HepG2 (cell line): ENCODE measurements at regions of chr17 and their contacts with region 1.

Region 1: DNA sequence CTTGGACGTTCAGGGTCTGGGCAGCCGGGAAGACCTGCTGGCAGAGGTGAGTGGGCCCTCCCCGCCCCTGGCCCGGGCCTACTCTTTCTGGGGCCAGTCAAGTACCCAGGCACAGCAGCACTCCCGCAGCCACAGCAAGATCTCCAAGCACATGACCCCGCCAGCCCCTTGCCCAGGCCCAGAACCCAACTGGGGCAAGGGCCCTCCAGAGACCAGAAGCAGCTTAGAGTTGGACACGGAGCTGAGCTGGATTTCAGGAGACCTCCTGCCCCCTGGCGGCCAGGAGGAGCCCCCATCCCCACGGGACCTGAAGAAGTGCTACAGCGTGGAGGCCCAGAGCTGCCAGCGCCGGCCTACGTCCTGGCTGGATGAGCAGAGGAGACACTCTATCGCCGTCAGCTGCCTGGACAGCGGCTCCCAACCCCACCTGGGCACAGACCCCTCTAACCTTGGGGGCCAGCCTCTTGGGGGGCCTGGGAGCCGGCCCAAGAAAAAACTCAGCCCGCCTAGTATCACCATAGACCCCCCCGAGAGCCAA is 8.6 kb upstream of the ABCC3 start:
- DNase-seq: peak; percentile 84
- ATAC-seq: peak; percentile 82
- H3K4me3 ChIP-seq: peak overlapping the region; percentile 40 to 74 (median 45); a peak in 5 of 6 replicates
- H3K27ac ChIP-seq: no peak overlapping the region
- H3K4me1 ChIP-seq: peaks cover 63% of the 10 kb centered on the region
- H3K27me3 ChIP-seq: peaks cover 0 to 34% of the 10 kb centered on the region in 2 experiments; a peak in 4 of 5 replicates
- CTCF ChIP-seq: peak; percentile 99
- EP300 ChIP-seq: no peak
- POLR2A ChIP-seq: no peak
- RAD21 ChIP-seq: peak; percentile 97

Region 2: DNA sequence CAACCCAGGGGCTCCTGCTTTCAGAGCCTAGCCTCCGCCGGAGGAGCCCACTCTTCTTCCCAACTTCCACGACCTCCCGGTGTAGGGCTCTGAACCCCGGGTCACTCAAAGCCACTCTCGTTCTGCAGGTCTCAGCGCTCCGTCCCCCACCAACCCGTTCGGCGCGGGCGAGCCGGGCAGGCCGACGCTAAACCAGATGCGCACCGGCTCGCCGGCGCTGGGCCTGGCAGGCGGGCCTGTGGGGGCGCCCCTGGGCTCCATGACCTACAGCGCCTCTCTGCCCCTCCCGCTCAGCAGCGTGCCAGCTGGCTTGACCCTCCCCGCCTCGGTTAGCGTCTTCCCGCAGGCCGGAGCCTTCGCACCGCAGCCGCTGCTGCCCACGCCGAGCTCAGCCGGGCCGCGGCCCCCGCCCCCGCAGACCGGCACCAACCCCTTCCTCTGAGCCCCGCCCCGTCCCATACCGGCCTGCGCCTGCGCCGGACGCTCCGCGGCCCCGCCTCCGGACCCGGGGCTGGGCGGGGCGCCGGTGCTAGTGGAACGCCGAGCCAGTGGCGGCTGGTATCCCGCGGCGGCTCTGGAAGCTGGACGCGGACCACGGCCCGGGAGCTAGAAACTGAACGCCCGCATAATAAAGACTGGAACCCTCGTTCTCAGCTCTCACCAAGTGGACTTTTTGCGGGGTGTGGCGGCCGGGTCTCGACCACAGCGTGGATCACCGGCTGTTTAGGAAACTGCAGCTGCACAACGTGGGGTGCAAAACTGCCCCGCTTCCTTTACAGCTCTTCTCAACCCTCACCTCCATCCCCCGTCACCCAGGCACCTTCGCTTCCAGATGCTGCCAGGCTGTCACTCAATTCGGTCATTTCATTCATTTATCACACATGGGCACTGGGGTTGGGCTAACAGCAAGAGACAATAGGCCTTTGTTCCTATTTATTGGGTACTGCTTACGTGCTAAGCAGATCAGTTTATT is 84.1 kb before region 1 on chr17:
- CTCF ChIA-PET with region 1: interaction called, 18 read pairs
- POLR2A ChIA-PET with region 1: interaction called, 45 read pairs
- in situ Hi-C with region 1: loop called (anchors 5 kb)
- intact Hi-C with region 1: loop called (anchors 1 kb)
- DNase-seq: peak; percentile 81
- ATAC-seq: peak; percentile 69
- H3K4me3 ChIP-seq: peak overlapping the region; percentile 73 to 87 (median 78)
- H3K27ac ChIP-seq: peak overlapping the region; percentile 97
- H3K4me1 ChIP-seq: peaks cover 80% of the 10 kb centered on the region
- H3K27me3 ChIP-seq: no peaks in the 10 kb centered on the region; a peak in 1 of 5 replicates
- CTCF ChIP-seq: peak; percentile 54; the same call in 1 of the 2 replicates
- EP300 ChIP-seq: 0 out of 4 replicates have a peak, but pooled peaks of 1 of the 2 experiments have one; percentile 5
- POLR2A ChIP-seq: peak; percentile 90
- RAD21 ChIP-seq: peak; percentile 69; the same call in 1 of the 2 replicates

Region 3: GRCh38 chr17:50547035-50547735 is 78.9 kb before region 1 on chr17 and contains the start of gene SPATA20:
- CTCF ChIA-PET with region 1: interaction called, 18 read pairs
- POLR2A ChIA-PET with region 1: interaction called, 45 read pairs
- in situ Hi-C with region 1: loop called (anchors 5 kb)
- intact Hi-C with region 1: loop called (anchors 1 kb)
- DNase-seq: peak; percentile 88
- ATAC-seq: peak; percentile 76
- H3K4me3 ChIP-seq: peak within 1 kb of the TSS; percentile 63 to 87 (median 79)
- H3K27ac ChIP-seq: peak within 1 kb of the TSS; percentile 62
- H3K4me1 ChIP-seq: peaks cover 74% of the 10 kb centered on the region
- H3K27me3 ChIP-seq: no peaks in the 10 kb centered on the region; a peak in 1 of 5 replicates
- CTCF ChIP-seq: peak; percentile 99
- EP300 ChIP-seq: peak in 1 of 2 experiments; percentile 31; a peak in 1 of 4 replicates
- POLR2A ChIP-seq: peak; percentile 81 to 89
- RAD21 ChIP-seq: peak; percentile 100
- total RNA-seq, gene SPATA20: 35.7 and 64.8 TPM in 2 replicates

Region 4: DNA sequence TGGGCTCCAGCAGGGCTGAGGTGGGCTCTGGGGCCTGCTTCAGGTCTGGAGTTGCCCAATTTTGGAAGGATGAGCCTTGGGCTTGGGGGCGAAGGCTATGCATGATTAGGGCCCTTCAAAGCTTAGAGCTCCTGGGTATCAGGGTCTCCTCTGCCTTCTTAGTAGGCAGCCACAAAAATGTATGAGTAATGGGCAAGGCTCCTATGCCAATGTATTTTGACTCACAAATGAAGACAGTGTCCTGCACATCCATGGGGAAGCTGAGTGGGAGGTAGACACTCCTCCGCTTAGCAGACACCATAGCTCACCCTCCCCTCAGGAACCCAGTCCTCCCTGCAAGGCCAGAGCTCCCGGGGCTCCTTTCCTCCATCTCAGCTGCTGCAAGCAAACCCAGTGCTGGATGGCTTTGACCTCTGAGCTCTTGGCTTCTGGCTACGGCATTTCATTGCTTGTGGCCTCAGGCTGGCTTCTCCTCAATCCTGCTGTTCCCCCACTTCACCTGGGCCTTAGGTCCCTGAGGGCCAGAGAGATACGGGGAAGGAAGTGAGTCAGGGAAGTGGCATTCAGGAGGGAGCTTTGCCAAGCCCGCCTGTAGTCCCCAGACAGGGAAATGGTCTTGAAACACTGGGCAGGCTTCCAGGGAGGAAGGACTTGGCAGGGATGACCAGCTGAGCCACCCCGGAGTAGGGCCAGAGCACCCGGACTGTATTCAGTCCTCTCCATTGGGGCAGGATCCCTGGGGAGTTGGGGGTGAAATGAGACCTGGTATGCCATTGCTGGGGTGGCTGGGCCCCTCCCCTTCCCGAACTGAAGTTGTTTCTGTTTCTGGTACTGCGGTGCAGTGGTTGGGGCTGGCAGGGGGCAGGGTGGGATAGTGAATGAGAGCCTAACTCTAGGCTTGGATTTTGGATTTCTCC is 13.0 kb after region 1 on chr17:
- CTCF ChIA-PET with region 1: no interaction called
- POLR2A ChIA-PET with region 1: interaction called, 58 read pairs
- in situ Hi-C with region 1: no loop called
- intact Hi-C with region 1: no loop called
- DNase-seq: peak; percentile 58
- ATAC-seq: peak; percentile 1; the same call in 2 of the 3 replicates
- H3K4me3 ChIP-seq: peak overlapping the region in 1 of 3 experiments; percentile 45; a peak in 2 of 6 replicates
- H3K27ac ChIP-seq: peak overlapping the region; percentile 56
- H3K4me1 ChIP-seq: peaks cover 95% of the 10 kb centered on the region
- H3K27me3 ChIP-seq: peaks cover 0 to 3% of the 10 kb centered on the region in 2 experiments; a peak in 2 of 5 replicates
- CTCF ChIP-seq: no peak
- EP300 ChIP-seq: no peak; a peak in 1 of 4 replicates
- POLR2A ChIP-seq: no peak
- RAD21 ChIP-seq: no peak

Region 5: DNA sequence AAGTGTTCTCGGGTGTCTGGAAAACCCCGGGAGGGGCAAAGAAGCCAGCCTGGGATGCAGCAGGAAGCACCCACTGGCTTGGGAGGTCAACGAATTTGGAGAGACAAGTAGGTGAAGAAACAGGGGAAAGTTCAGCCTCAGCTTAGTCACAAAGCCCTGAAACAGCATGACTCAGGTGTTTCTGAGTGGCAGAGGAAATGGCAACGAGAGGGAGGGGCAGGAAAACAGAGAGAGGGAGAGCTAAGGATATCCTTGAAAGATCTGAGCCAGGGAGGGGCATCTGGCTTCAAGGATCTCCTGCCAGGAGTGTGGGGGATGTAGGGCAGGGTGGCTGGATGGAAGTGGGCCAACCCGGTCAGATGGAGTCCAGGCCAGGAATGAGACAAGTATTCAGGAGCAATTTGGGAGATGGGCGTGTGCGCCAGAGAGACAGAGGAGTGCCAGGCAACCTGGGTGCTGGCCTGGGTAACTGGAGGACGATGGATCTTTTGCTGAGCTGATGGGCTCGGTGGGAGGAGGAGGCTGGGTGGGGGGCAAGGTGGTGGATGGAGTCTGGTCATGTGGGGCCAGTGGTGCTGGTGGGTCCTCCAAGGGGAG is 35.8 kb after region 1 on chr17:
- CTCF ChIA-PET with region 1: no interaction called
- POLR2A ChIA-PET with region 1: interaction called, 22 read pairs
- in situ Hi-C with region 1: no loop called
- intact Hi-C with region 1: no loop called
- DNase-seq: peak; percentile 93
- ATAC-seq: peak; percentile 42
- H3K4me3 ChIP-seq: peak overlapping the region in 1 of 3 experiments; percentile 11; a peak in 2 of 6 replicates
- H3K27ac ChIP-seq: peak overlapping the region; percentile 82
- H3K4me1 ChIP-seq: peaks cover 76% of the 10 kb centered on the region
- H3K27me3 ChIP-seq: no peaks in the 10 kb centered on the region
- CTCF ChIP-seq: no peak
- EP300 ChIP-seq: peak; percentile 31 to 94; a peak in 3 of 4 replicates
- POLR2A ChIP-seq: peak in 1 of 2 experiments; percentile 48; a peak in 1 of 4 replicates
- RAD21 ChIP-seq: no peak

Region 6: GRCh38 chr17:50681263-50682210 is 55.4 kb after region 1 on chr17:
- CTCF ChIA-PET with region 1: interaction called, 18 read pairs
- POLR2A ChIA-PET with region 1: interaction called, 839 read pairs
- in situ Hi-C with region 1: no loop called
- intact Hi-C with region 1: no loop called
- DNase-seq: peak; percentile 69
- ATAC-seq: 0 out of 3 replicates have a peak, but pooled peaks have one; percentile 1
- H3K4me3 ChIP-seq: no peak overlapping the region
- H3K27ac ChIP-seq: no peak overlapping the region
- H3K4me1 ChIP-seq: peaks cover 86% of the 10 kb centered on the region
- H3K27me3 ChIP-seq: no peaks in the 10 kb centered on the region; a peak in 1 of 5 replicates
- CTCF ChIP-seq: peak; percentile 78
- EP300 ChIP-seq: no peak
- POLR2A ChIP-seq: no peak
- RAD21 ChIP-seq: peak; percentile 83

Region 7: DNA sequence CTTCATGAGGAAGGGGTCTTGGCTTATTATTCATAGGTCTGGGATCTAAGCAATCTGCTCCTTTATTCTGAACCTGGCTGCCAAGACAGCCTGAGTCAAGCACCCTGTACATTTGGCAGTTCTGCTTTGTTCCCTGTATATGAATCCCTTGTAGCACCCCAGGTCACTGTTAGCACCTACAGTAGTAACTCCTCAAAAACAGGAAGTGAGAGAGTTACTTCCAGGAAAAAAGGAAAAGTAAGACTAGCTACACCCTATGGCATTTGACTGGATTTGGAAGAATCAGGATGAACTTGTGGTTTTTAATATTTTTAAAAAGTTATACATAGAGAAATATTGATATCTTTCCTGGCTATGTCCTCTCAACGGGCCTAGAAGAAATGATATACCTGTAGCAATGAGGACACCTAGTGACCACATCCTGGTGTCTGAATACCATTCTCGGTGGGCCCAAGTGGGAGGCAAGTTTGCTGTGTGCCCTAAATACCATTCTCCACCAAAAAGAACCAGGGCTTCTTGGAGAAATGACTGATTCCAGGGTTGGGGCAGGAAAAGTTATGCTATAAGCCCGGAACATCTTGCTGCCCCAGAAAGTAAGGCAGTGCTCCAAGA is 71.7 kb after region 1 on chr17:
- CTCF ChIA-PET with region 1: interaction called, 67 read pairs
- POLR2A ChIA-PET with region 1: interaction called, 839 read pairs
- in situ Hi-C with region 1: loop called (anchors 5 kb)
- intact Hi-C with region 1: loop called (anchors 1 kb)
- DNase-seq: no peak
- ATAC-seq: no peak
- H3K4me3 ChIP-seq: no peak overlapping the region
- H3K27ac ChIP-seq: no peak overlapping the region
- H3K4me1 ChIP-seq: peaks cover 34% of the 10 kb centered on the region
- H3K27me3 ChIP-seq: no peaks in the 10 kb centered on the region
- CTCF ChIP-seq: peak; percentile 66
- EP300 ChIP-seq: no peak
- POLR2A ChIP-seq: no peak
- RAD21 ChIP-seq: peak; percentile 39; the same call in 1 of the 2 replicates

Region 8: DNA sequence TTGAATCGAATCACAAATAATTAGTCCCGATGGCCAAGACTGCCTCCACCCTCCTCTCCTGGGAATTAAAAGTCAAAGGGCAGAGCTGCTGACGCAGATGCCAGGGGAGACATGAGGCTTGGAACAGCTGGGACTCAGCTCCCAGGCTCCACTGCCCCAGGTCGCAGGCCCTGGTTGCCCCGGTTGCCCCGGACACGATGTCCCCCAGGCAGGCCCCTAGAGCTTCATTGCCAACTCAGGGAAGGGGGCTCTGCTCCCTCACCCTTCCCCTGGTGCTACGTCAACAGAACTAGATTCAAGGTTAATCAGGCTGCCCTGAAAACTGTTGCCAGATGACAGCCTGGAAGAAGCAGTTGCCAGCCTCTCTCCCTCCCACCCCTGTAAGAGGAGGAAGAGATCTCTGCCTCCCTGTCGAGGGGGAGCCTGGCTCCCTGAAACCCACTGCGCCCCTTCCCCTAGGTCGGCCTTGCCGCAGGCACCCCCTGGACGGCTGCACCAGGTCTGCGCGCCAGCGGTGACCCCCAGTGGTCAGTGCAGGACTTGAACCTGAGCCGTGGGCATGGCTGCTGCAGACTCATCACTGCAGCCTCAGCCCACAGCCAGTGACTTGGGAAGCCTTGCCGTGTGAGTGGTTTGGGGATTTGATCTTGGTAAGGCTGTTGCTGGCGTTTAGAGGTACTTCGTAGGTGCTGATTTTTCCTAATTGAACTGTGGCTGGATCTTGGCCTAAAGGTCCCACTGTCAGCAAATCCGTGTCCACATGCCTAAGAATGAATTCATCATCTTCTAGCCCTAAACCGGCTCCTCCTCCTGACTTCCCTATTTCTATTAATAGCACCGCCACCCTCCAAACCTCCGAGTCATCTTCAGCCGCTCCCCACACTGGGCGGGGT is 324.1 kb after region 1 on chr17:
- CTCF ChIA-PET with region 1: no interaction called
- POLR2A ChIA-PET with region 1: no interaction called
- in situ Hi-C with region 1: no loop called
- intact Hi-C with region 1: no loop called
- DNase-seq: peak; percentile 65
- ATAC-seq: peak; percentile 81
- H3K4me3 ChIP-seq: peak overlapping the region; percentile 10 to 69 (median 27); a peak in 5 of 6 replicates
- H3K27ac ChIP-seq: peak overlapping the region; percentile 34
- H3K4me1 ChIP-seq: peaks cover 85% of the 10 kb centered on the region
- H3K27me3 ChIP-seq: no peaks in the 10 kb centered on the region
- CTCF ChIP-seq: peak; percentile 100
- EP300 ChIP-seq: no peak
- POLR2A ChIP-seq: no peak
- RAD21 ChIP-seq: peak; percentile 100